ENCODE measurements at regions of chr5 and their contacts with region 1.

Region 1: GRCh38 chr5:141557681-141558136 is 61.1 kb downstream of the DIAPH1 start:
- DNase-seq: peak; percentile 97
- H3K4me3 ChIP-seq: peak overlapping the region; percentile 25; the same call in 1 of the 2 replicates
- H3K27ac ChIP-seq: peak overlapping the region; percentile 84
- H3K27me3 ChIP-seq: no peaks in the 10 kb centered on the region
- CTCF ChIP-seq: peak; percentile 84

Region 2: GRCh38 chr5:141320225-141321169 is 237.2 kb before region 1 on chr5 and contains the start of gene TAF7:
- CTCF ChIA-PET with region 1: interaction called, 133 read pairs
- POLR2A ChIA-PET with region 1: interaction called, 5 read pairs
- DNase-seq: peak; percentile 84
- H3K4me3 ChIP-seq: peak within 1 kb of the TSS; percentile 84
- H3K27ac ChIP-seq: peak within 1 kb of the TSS; percentile 99
- H3K27me3 ChIP-seq: no peaks in the 10 kb centered on the region
- CTCF ChIP-seq: peak; percentile 88
- polyA plus RNA-seq, gene TAF7: 60.3 and 71.0 TPM in 2 replicates

Region 3: DNA sequence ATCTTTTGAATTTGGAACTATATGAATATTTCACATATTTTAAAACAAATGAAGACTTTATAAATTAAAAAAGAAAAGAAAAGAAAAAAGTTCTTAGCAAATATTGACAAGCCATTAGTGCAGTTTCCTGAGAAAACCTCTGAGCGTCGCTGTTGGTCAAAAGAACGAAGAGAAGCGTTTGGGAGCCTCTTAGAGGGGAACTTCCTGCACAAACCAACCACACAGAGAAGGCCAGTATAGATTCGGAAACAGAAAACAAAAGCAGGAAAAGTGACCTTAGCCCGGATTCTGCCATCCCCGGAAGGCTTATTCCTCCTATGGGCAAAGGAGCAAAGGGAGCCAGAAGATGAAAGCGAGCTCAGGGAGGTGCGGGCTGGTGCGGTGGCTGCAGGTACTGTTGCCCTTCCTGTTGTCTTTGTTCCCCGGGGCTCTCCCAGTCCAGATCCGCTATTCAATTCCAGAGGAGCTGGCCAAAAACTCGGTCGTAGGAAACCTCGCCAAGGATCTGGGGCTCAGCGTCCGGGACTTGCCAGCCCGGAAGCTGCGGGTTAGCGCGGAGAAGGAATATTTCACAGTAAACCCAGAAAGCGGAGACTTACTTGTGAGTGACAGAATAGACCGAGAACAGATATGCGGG is 197.8 kb before region 1 on chr5 and contains the start of gene PCDHGB2:
- CTCF ChIA-PET with region 1: interaction called, 35 read pairs
- POLR2A ChIA-PET with region 1: no interaction called
- DNase-seq: no peak
- H3K4me3 ChIP-seq: peak within 1 kb of the TSS; percentile 50
- H3K27ac ChIP-seq: peak within 1 kb of the TSS; percentile 49
- H3K27me3 ChIP-seq: peaks cover 17% of the 10 kb centered on the region
- CTCF ChIP-seq: peak; percentile 49
- polyA plus RNA-seq, gene PCDHGB2: 4.6 and 4.8 TPM in 2 replicates

Region 4: GRCh38 chr5:141402553-141403260 is 155.0 kb before region 1 on chr5 and contains the start of gene PCDHGA9:
- CTCF ChIA-PET with region 1: interaction called, 54 read pairs
- POLR2A ChIA-PET with region 1: no interaction called
- DNase-seq: no peak
- H3K4me3 ChIP-seq: peak within 1 kb of the TSS; percentile 45
- H3K27ac ChIP-seq: peak within 1 kb of the TSS; percentile 47
- H3K27me3 ChIP-seq: no peaks in the 10 kb centered on the region
- CTCF ChIP-seq: peak; percentile 53
- polyA plus RNA-seq, gene PCDHGA9: 6.4 and 8.0 TPM in 2 replicates

Region 5: GRCh38 chr5:141437221-141437620 is 120.5 kb before region 1 on chr5:
- CTCF ChIA-PET with region 1: interaction called, 94 read pairs
- POLR2A ChIA-PET with region 1: no interaction called
- DNase-seq: no peak
- H3K4me3 ChIP-seq: no peak overlapping the region
- H3K27ac ChIP-seq: no peak overlapping the region
- H3K27me3 ChIP-seq: no peaks in the 10 kb centered on the region
- CTCF ChIP-seq: no peak

Region 6: DNA sequence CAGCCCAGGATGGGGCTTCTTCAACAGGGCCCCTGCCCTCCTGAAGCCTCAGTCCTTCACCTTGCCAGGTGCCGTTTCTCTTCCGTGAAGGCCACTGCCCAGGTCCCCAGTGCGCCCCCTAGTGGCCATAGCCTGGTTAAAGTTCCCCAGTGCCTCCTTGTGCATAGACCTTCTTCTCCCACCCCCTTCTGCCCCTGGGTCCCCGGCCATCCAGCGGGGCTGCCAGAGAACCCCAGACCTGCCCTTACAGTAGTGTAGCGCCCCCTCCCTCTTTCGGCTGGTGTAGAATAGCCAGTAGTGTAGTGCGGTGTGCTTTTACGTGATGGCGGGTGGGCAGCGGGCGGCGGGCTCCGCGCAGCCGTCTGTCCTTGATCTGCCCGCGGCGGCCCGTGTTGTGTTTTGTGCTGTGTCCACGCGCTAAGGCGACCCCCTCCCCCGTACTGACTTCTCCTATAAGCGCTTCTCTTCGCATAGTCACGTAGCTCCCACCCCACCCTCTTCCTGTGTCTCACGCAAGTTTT is 45.3 kb before region 1 on chr5:
- CTCF ChIA-PET with region 1: interaction called, 28 read pairs
- POLR2A ChIA-PET with region 1: interaction called, 8 read pairs
- DNase-seq: no peak
- H3K4me3 ChIP-seq: no peak overlapping the region
- H3K27ac ChIP-seq: peak overlapping the region; percentile 80
- H3K27me3 ChIP-seq: no peaks in the 10 kb centered on the region
- CTCF ChIP-seq: peak; percentile 83

Measured in AG04450 (cell line).